ENCODE measurements at regions of chr1 and their contacts with region 1.

Region 1: GRCh38 chr1:226608699-226609505 is 60.3 kb downstream of the STUM start:
- DNase-seq: peak; percentile 63 to 72
- ATAC-seq: peak; percentile 40 to 92; a peak in 4 of 6 replicates
- H3K4me3 ChIP-seq: no peak overlapping the region
- H3K27ac ChIP-seq: no peak overlapping the region
- H3K4me1 ChIP-seq: no peaks in the 10 kb centered on the region
- CTCF ChIP-seq: peak; percentile 73
- EP300 ChIP-seq: no peak
- POLR2A ChIP-seq: no peak
- RAD21 ChIP-seq: peak; percentile 38 to 52; a peak in 4 of 5 replicates

Region 2: DNA sequence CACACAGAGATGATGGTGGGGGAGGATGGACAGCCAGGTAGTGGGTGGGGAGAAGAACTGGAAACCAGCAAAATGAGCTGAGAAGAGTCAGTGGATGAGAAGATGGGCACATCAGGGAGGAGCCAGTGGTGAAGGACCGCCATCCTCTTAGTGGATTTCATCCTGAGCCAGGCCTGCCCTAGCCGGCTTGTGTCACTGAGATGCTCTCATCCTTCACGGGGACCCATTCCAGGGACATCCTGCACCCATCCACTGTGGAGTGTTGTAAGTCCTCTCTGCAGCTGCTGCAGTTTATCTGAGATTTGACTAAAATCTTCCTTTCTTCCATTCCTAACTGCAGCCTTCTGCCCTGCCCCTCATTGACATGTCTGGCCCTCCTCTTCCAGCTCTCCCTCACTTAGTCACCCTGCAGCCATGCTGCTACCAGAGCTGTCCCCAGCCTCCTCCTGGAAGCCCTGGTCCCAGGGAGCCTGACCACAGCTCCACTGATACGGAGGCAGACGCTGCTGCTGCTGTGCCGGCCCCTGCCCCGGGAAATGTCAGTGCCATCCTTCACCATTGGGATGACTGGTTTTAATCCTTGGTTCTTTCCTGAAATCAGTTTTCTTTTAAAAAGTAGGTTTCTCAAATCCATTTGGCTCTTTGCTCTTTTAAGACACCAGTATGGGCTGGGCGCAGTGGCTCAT is 27.1 kb before region 1 on chr1:
- CTCF ChIA-PET with region 1: interaction called, 10 read pairs
- POLR2A ChIA-PET with region 1: no interaction called
- DNase-seq: no peak
- ATAC-seq: no peak
- H3K4me3 ChIP-seq: no peak overlapping the region
- H3K27ac ChIP-seq: no peak overlapping the region
- H3K4me1 ChIP-seq: no peaks in the 10 kb centered on the region
- CTCF ChIP-seq: no peak
- EP300 ChIP-seq: no peak
- POLR2A ChIP-seq: no peak
- RAD21 ChIP-seq: no peak

Region 3: DNA sequence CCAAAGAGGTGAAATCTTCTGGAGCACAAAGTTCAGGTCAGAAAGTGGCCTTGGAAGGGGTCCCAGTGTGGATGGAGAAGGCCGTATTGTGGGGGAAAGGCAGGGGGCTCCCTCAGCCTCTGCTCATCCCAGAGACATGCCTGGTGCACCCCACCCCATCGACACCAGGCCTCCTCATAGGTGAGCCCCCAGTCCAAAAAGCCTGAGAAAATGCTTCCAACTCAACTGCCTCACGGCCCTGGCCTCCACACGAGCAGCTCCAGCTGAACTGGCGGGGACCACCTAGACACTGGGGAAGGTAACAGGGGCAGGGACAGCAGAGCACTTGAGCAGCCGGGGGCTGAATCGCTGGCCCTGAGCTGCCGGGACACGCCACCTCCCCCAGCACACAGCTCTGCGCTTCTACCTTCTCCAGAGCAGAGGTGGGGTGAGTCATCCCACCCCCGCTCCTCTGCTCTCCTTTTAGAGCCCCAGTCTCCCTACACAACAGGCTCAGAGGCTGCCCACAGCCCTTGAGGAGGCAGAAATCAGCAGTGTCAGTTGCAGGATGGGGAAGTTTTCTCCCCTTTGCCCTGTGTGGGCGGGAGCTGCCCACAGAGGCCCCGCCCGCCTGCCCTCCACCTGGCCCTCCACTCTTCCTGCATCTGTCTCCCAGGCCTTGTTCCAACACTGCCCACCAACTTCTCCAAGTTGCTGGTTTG is 34.1 kb after region 1 on chr1:
- CTCF ChIA-PET with region 1: no interaction called
- POLR2A ChIA-PET with region 1: no interaction called
- DNase-seq: no peak
- ATAC-seq: peak in 1 of 2 experiments; percentile 52; a peak in 3 of 6 replicates
- H3K4me3 ChIP-seq: no peak overlapping the region
- H3K27ac ChIP-seq: no peak overlapping the region
- H3K4me1 ChIP-seq: no peaks in the 10 kb centered on the region
- CTCF ChIP-seq: no peak
- EP300 ChIP-seq: no peak
- POLR2A ChIP-seq: no peak
- RAD21 ChIP-seq: no peak

Measured in A549 (cell line).